GM13977 (cell line): ENCODE measurements at regions of chr12 and their contacts with region 1.

Region 1: DNA sequence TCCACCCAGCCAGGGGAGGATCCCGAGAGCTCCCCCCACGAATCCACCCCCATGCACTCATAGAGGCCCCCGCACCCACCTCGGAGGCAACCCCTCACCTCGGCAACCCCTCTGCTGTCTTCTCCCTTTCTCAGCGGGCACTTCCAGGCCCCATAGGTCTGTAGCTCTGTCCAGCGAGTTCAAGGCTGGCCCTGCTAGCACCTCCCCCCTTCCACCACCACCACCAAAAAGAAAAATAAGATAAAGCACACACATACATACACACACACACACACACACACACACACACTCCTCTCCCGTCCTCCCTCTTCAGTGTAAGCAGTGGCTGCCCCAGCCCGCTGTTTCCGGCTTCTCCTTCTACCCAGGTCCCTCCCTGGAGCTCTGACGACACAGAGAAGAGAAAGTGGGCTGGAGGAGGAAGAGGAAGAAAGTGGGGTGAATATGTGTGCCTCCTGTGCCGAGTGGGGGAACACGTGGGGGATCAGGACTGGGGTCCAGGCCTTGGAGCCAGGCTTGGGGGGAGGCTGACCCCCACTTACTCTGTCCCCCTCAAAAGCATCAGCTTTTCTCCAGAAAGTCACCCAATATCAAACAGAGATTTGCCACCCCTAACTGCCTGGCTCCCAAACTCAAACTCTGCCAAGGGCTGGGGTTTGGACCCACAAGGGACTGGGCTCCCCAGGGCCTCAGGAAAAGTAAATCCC is at the start of gene STAT6:
- DNase-seq: peak; percentile 73
- CTCF ChIP-seq: no peak

Region 2: DNA sequence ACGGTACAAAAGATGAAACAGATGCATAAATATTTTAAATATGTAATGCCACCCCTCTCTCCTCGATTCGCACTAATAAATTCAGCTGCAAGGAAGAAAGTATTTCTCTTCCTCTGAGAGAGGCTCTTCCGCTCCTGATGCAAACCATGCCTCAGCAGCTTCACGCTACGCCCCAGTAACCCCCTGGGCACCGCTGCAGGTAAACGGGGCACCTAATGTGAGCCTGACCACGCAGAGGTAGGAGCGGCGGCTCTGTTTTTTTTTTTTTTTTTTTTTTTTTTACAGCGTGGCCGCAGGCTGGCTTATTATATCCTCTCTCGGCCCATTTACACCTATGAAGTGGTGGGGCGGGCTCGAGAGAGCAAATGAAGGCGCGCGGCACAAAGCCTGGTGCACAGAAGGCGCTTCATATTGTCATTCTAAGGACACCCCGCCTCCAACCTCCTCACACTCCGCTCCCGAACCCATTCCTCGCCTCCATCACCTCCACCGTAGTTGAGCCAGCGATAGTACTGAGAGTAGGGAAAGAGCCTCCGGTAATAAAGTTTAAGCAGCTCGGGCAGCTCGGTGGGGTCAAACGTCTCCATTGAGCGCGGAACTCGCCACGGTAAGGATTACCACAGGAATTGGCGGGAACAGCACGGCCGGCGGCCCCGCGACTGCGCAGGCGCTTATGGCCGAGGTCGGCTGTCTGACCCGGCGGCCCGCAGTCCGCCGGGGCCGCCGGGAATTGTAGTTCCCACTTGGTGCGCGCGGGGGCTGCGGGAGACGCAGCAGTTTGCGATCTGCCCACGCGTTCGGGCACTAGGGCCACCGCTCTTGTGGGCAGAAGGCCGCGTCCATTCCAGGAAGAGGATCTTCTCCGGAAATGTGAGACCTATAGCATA is 359.2 kb before region 1 on chr12 and contains the start of gene PRIM1:
- in situ Hi-C with region 1: loop called (anchors 10 kb)
- DNase-seq: peak; percentile 90
- CTCF ChIP-seq: no peak

Region 3: GRCh38 chr12:57416039-57416996 is 305.1 kb after region 1 on chr12:
- in situ Hi-C with region 1: no loop called
- DNase-seq: no peak
- CTCF ChIP-seq: no peak